Activated naive CD4-positive, alpha-beta T cell treated with anti-CD3 and anti-CD28 coated beads for 36 hours (primary cell): ENCODE measurements at regions of chr6 and their contacts with region 1.

Region 1: GRCh38 chr6:35624341-35625070 is 64.2 kb downstream of the FKBP5 start:
- DNase-seq: no peak
- H3K4me3 Mint-ChIP-seq: no peak overlapping the region
- H3K27ac Mint-ChIP-seq: peak overlapping the region; percentile 30
- H3K4me1 Mint-ChIP-seq: peaks cover 48% of the 10 kb centered on the region
- H3K27me3 Mint-ChIP-seq: no peaks in the 10 kb centered on the region

Region 2: GRCh38 chr6:35583893-35584688 is 40.4 kb before region 1 on chr6:
- CTCF ChIA-PET with region 1: interaction called, 41 read pairs
- intact Hi-C with region 1: loop called (anchors 1 kb)
- DNase-seq: peak; percentile 87
- H3K4me3 Mint-ChIP-seq: no peak overlapping the region
- H3K27ac Mint-ChIP-seq: peak overlapping the region; percentile 37
- H3K4me1 Mint-ChIP-seq: peaks cover 64% of the 10 kb centered on the region
- H3K27me3 Mint-ChIP-seq: no peaks in the 10 kb centered on the region

Region 3: DNA sequence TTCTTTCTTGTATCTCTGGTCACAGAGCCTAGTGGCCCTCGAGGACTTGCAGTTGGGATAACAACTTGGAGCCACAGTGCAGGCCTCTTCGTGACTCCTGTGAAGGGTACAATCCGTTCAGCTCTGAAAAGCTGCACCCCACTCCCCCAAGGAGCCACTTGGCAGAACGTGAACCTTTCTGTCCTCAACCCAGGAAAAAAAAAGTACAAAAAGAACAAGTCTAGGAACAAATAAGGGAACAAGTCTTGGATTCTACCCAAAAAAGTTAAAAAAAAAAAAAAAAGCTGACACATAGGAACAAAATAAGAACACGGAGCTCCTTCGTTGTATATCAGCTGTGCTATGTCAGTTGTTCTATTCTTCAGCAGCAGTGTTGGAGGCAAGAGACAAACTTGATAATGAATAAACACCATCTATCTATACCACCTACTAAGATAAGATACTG is 33.9 kb before region 1 on chr6:
- CTCF ChIA-PET with region 1: interaction called, 41 read pairs
- intact Hi-C with region 1: no loop called
- DNase-seq: no peak
- H3K4me3 Mint-ChIP-seq: no peak overlapping the region
- H3K27ac Mint-ChIP-seq: peak overlapping the region; percentile 39
- H3K4me1 Mint-ChIP-seq: peaks cover 90% of the 10 kb centered on the region
- H3K27me3 Mint-ChIP-seq: no peaks in the 10 kb centered on the region

Region 4: DNA sequence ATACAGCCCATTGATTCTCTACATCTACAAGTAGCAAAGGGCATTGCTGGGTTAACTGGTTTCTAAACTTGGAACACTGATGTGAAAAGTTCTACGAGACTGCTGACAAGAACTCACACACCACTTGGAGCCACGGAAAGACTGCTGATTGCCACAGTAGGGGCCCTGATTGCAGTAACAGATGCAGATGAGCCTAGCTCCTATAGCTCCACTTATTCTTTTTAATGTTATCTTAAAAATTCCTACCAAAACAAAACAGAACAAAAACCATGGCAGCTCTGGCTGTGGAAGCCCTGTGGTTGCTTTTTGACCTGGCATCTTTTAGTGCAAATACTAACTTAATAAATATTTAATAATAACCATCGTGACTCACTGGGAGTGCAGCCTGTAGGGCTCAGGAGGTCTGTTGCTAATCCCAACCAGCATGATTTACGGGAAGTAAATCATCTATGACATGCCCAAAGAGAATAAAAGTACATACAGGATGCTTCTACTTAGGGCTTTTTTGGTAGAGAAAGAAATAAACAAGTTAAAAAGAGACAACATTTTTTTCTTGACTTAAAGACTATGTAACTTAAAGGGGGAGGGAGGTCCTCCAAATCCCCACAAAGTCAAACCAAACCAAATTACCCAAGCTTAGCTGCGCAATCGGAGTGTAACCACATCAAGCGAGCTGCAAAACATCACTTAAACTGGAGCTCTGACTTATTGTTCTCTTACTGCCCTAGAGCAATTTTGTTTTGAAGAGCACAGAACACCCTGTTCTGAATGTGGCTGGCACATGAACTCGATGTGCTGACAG is 23.0 kb before region 1 on chr6:
- CTCF ChIA-PET with region 1: interaction called, 24 read pairs
- intact Hi-C with region 1: no loop called
- DNase-seq: peak; percentile 78
- H3K4me3 Mint-ChIP-seq: peak overlapping the region; percentile 58
- H3K27ac Mint-ChIP-seq: peak overlapping the region; percentile 80
- H3K4me1 Mint-ChIP-seq: peaks cover 79% of the 10 kb centered on the region
- H3K27me3 Mint-ChIP-seq: no peaks in the 10 kb centered on the region

Region 5: DNA sequence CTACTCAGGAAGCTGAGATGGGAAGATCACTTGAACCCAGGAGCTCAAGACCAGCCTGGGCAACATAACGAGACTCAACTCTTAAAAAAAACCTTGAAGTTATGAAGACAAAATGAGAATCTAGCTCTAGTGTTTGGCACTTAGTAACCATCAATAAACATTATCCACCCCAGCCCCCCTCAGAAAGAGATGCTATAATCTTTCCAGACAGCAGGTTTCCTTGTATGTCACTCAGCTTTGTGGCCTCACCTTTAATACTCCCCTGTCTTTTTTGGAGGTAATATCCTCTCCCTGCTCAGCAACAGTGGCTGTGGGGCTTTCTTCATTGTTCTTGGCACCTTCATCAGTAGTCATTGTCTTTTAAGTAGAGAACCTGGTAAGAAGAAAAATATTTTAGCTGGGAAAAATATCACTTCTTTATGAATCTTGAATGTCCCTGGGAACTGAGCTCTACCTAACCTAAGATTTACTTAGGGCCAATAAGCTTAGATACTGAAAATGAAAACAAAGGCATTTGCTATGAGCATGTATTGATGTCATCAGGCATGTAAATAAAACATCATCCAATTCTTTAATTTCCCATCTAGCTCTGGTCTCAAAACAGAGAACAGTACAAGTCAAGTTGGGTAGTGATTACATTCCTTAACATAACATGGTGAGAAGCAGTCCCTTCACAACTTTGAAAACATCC is 18.1 kb after region 1 on chr6:
- CTCF ChIA-PET with region 1: interaction called, 10 read pairs
- intact Hi-C with region 1: no loop called
- DNase-seq: no peak
- H3K4me3 Mint-ChIP-seq: no peak overlapping the region
- H3K27ac Mint-ChIP-seq: peak overlapping the region; percentile 48
- H3K4me1 Mint-ChIP-seq: peaks cover 74% of the 10 kb centered on the region
- H3K27me3 Mint-ChIP-seq: no peaks in the 10 kb centered on the region

Region 6: GRCh38 chr6:35654883-35655282 is 30.4 kb after region 1 on chr6:
- CTCF ChIA-PET with region 1: no interaction called
- intact Hi-C with region 1: no loop called
- DNase-seq: no peak
- H3K4me3 Mint-ChIP-seq: no peak overlapping the region
- H3K27ac Mint-ChIP-seq: no peak overlapping the region
- H3K4me1 Mint-ChIP-seq: peaks cover 42% of the 10 kb centered on the region
- H3K27me3 Mint-ChIP-seq: no peaks in the 10 kb centered on the region